Activated B cell treated with CpG ODN at 0.5 μM for 24 hours (primary cell): ENCODE measurements at regions of chr20 and their contacts with region 1.

Region 1: GRCh38 chr20:25065625-25066338 is 7.8 kb upstream of the ACSS1 start:
- DNase-seq: peak; percentile 48
- ATAC-seq: peak; percentile 86
- H3K4me3 Mint-ChIP-seq: no peak overlapping the region
- H3K27ac Mint-ChIP-seq: no peak overlapping the region
- H3K4me1 Mint-ChIP-seq: peaks cover 21% of the 10 kb centered on the region
- H3K27me3 Mint-ChIP-seq: peaks cover under 1% of the 10 kb centered on the region
- CTCF ChIP-seq: peak; percentile 36

Region 2: DNA sequence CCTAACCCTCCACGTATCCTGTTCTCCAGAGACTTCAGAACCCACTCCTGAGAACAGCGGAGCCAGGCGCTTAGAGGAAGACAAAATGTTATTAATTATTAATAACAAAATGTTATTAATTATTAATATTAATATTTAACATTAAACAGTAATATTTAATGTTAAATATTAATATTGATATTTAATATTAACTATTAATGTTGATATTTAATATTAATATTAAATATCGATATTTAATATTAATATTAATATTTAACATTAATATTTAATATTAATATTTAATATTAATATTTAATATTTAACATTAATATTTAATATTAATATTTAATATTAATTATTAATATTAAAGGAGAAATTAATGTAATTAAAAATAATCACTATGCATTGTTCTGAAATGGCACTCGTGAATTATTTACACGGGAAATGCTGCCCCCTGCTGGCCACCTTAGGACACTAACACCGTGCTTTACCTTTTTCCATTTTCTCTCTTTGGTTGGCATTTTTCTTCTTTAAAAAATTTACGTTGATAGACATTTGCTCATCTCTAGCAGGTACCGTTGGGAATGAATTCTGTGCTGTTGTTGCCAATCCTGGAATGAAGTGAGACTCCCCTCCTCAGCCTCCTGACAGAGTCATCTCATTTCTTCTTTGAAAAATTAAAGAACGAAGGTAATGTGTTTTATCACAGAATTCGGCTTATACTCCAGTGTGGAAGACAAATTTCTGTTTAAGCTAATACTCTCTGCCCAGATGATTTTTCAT is 1069.7 kb before region 1 on chr20:
- CTCF ChIA-PET with region 1: no interaction called
- POLR2A ChIA-PET with region 1: no interaction called
- intact Hi-C with region 1: loop called (anchors 5 kb)
- DNase-seq: peak; percentile 27
- ATAC-seq: no peak
- H3K4me3 Mint-ChIP-seq: no peak overlapping the region
- H3K27ac Mint-ChIP-seq: no peak overlapping the region
- H3K4me1 Mint-ChIP-seq: no peaks in the 10 kb centered on the region
- H3K27me3 Mint-ChIP-seq: peaks cover 2% of the 10 kb centered on the region
- CTCF ChIP-seq: peak; percentile 52

Region 3: DNA sequence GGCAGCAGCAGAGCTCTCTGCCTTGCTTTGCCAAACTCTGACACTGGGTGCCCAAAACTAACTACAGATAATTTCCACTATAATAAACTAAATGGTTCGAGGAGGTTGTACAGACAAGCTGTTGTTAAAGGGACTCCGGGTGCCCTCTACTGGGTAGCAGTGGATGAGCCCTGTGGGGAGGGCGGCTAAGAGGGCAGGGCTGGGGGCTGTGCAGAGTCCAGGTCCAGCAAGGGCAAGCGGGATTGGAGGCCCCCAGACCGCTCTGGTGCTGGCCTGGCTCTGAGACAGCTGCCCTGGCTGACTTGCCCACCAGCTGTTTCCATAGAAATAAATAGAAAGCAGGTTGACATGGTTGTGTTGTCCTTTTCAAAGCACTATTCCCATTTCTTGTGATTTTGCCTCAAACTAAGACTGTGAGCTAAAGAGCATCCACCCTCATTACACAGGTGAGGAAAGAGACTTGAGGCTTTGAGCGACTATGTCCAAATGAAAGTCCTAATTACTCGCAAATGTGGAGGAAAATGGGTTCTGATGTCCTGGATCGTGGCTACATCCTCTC is 284.3 kb before region 1 on chr20:
- CTCF ChIA-PET with region 1: no interaction called
- POLR2A ChIA-PET with region 1: no interaction called
- intact Hi-C with region 1: loop called (anchors 2 kb)
- DNase-seq: no peak
- ATAC-seq: no peak
- H3K4me3 Mint-ChIP-seq: no peak overlapping the region
- H3K27ac Mint-ChIP-seq: no peak overlapping the region
- H3K4me1 Mint-ChIP-seq: peaks cover 9% of the 10 kb centered on the region
- H3K27me3 Mint-ChIP-seq: peaks cover 4% of the 10 kb centered on the region
- CTCF ChIP-seq: no peak

Region 4: GRCh38 chr20:25178563-25179438 is 113.0 kb after region 1 on chr20:
- CTCF ChIA-PET with region 1: no interaction called
- POLR2A ChIA-PET with region 1: no interaction called
- intact Hi-C with region 1: loop called (anchors 5 kb)
- DNase-seq: no peak
- ATAC-seq: peak; percentile 37
- H3K4me3 Mint-ChIP-seq: no peak overlapping the region
- H3K27ac Mint-ChIP-seq: no peak overlapping the region
- H3K4me1 Mint-ChIP-seq: no peaks in the 10 kb centered on the region
- H3K27me3 Mint-ChIP-seq: peaks cover 10% of the 10 kb centered on the region
- CTCF ChIP-seq: no peak

Region 5: GRCh38 chr20:25195014-25195961 is 129.5 kb after region 1 on chr20 and contains the start of gene ENTPD6:
- CTCF ChIA-PET with region 1: no interaction called
- POLR2A ChIA-PET with region 1: no interaction called
- intact Hi-C with region 1: loop called (anchors 2 kb)
- DNase-seq: peak; percentile 99
- ATAC-seq: peak; percentile 82
- H3K4me3 Mint-ChIP-seq: peak within 1 kb of the TSS; percentile 90
- H3K27ac Mint-ChIP-seq: peak within 1 kb of the TSS; percentile 86
- H3K4me1 Mint-ChIP-seq: peaks cover 20% of the 10 kb centered on the region
- H3K27me3 Mint-ChIP-seq: no peaks in the 10 kb centered on the region
- CTCF ChIP-seq: no peak
- total RNA-seq, gene ENTPD6: 37.2 and 44.4 TPM in 2 replicates